B cell (primary cell): ENCODE measurements at regions of chr1 and their contacts with region 1.

Region 1: DNA sequence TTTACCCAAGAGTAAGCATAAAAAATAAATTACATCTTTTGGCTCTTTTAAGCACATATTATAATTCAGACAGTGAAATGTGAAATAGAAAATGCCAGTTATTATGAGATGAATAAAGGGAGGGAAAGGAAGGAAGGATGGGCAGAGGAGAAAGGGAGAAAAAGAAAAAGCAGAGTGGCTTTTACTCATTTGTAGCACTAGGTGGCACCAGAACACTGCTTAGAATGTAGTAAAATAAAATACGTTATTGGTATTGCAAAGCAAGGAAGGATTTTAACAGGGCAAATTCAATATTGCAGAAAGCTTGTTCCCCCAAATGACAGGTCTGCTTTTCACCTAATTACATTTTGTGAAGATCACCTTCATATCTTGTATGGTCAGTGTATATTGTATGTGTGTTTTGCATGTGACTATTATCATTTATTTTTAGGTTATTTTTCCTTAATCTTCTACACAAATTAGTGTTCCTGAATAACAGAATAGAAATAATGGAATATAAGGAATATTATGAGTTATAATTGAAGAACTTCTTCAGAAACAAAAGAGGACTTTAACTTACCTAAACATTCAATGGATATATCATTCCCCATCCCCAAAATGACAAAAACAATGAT is 9.1 kb upstream of the PCNX2 start:
- DNase-seq: peak; percentile 59
- ATAC-seq: peak; percentile 41
- H3K4me3 ChIP-seq: no peak overlapping the region
- H3K4me3 Mint-ChIP-seq: no peak overlapping the region
- H3K27ac ChIP-seq: no peak overlapping the region
- H3K27ac Mint-ChIP-seq: no peak overlapping the region
- H3K4me1 ChIP-seq: peaks cover 0 to 11% of the 10 kb centered on the region in 2 donors
- H3K4me1 Mint-ChIP-seq: peaks cover 5% of the 10 kb centered on the region
- H3K27me3 ChIP-seq: peaks cover 0 to 5% (median 0%) of the 10 kb centered on the region in 4 experiments
- H3K27me3 Mint-ChIP-seq: peaks cover 6% of the 10 kb centered on the region
- CTCF ChIP-seq: peak; percentile 98

Region 2: GRCh38 chr1:233364695-233365539 is 60.3 kb after region 1 on chr1:
- CTCF ChIA-PET with region 1: interaction called, 5 read pairs
- POLR2A ChIA-PET with region 1: no interaction called
- intact Hi-C with region 1: loop called (anchors 1 kb)
- DNase-seq: peak; percentile 16
- ATAC-seq: no peak
- H3K4me3 ChIP-seq: no peak overlapping the region
- H3K4me3 Mint-ChIP-seq: no peak overlapping the region
- H3K27ac ChIP-seq: no peak overlapping the region
- H3K27ac Mint-ChIP-seq: no peak overlapping the region
- H3K4me1 ChIP-seq: no peaks in the 10 kb centered on the region
- H3K4me1 Mint-ChIP-seq: no peaks in the 10 kb centered on the region
- H3K27me3 ChIP-seq: no peaks in the 10 kb centered on the region
- H3K27me3 Mint-ChIP-seq: no peaks in the 10 kb centered on the region
- CTCF ChIP-seq: peak; percentile 82

Region 3: DNA sequence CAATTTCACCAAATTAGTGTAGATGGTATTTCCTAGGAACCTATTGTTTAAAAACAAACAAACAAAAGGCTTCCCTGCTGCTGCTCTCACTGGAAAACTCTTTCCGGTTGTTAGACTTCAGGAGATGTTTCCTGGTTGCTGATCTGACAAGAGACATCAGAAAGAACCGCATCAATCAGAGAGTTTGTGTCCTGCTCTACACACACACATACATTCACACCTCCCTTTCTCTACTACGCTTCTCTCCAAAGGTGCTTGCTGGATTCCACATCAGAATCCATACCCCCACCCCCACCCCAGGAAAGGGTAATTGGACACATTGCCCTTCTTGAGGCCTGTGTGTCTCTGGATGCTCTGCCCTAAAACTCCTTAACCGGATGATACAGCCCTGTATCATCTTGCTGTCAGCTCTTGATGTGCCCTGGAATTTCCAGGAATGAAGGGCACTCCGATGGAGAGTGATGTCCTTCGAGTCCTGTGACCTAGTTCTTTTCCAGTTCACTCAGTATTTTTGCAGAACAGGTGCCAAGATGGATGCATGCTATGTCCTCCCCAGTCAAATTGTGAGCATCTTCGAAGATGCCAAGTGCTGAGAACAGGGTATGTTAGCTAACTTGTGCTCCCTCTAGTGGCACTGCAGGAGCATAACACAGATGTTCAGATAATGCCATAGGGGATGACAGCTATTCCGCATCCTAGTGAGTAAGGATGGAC is 486.2 kb after region 1 on chr1:
- CTCF ChIA-PET with region 1: interaction called, 18 read pairs
- POLR2A ChIA-PET with region 1: no interaction called
- intact Hi-C with region 1: no loop called
- DNase-seq: peak; percentile 58
- ATAC-seq: peak; percentile 63
- H3K4me3 ChIP-seq: no peak overlapping the region
- H3K4me3 Mint-ChIP-seq: no peak overlapping the region
- H3K27ac ChIP-seq: no peak overlapping the region
- H3K27ac Mint-ChIP-seq: no peak overlapping the region
- H3K4me1 ChIP-seq: no peaks in the 10 kb centered on the region
- H3K4me1 Mint-ChIP-seq: no peaks in the 10 kb centered on the region
- H3K27me3 ChIP-seq: no peaks in the 10 kb centered on the region
- H3K27me3 Mint-ChIP-seq: peaks cover 18% of the 10 kb centered on the region
- CTCF ChIP-seq: peak; percentile 90

Region 4: DNA sequence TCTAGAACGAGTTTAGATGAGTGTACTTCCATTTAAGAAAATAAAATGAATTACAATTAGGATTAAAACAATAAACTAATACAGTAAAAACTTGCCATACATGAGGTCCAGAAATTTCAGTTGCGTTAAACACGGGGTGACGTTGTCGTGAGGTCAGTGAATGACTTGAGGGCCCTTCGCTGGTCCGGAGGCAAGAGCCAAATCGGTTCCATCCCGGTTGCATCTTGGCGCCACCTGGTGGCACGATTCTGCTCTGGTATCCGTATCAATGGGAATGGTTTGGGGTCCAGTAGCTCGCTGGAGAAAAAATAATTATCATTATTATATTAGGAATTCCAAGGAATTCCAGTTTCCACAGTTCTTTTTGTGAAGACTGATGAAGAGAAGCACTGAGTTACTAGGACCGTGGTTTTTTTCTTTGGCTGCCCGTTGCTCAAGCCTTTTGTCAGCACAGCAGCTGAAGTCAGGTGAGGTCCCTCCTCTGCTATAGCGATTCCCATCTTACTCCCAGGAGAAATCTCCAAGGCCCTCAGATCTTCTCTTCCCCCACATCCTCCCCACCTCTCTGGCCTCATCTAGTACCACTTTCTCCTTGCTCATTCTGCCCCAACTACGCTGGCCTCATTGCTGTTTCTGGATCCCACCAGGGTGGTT is 761.3 kb after region 1 on chr1:
- CTCF ChIA-PET with region 1: interaction called, 55 read pairs
- POLR2A ChIA-PET with region 1: no interaction called
- intact Hi-C with region 1: loop called (anchors 1 kb)
- DNase-seq: peak; percentile 63
- ATAC-seq: no peak
- H3K4me3 ChIP-seq: no peak overlapping the region
- H3K4me3 Mint-ChIP-seq: no peak overlapping the region
- H3K27ac ChIP-seq: no peak overlapping the region
- H3K27ac Mint-ChIP-seq: no peak overlapping the region
- H3K4me1 ChIP-seq: peaks cover 0 to 3% of the 10 kb centered on the region in 2 donors
- H3K4me1 Mint-ChIP-seq: no peaks in the 10 kb centered on the region
- H3K27me3 ChIP-seq: peaks cover 0 to 3% (median 0%) of the 10 kb centered on the region in 4 experiments
- H3K27me3 Mint-ChIP-seq: peaks cover 5% of the 10 kb centered on the region
- CTCF ChIP-seq: peak; percentile 89

Region 5: DNA sequence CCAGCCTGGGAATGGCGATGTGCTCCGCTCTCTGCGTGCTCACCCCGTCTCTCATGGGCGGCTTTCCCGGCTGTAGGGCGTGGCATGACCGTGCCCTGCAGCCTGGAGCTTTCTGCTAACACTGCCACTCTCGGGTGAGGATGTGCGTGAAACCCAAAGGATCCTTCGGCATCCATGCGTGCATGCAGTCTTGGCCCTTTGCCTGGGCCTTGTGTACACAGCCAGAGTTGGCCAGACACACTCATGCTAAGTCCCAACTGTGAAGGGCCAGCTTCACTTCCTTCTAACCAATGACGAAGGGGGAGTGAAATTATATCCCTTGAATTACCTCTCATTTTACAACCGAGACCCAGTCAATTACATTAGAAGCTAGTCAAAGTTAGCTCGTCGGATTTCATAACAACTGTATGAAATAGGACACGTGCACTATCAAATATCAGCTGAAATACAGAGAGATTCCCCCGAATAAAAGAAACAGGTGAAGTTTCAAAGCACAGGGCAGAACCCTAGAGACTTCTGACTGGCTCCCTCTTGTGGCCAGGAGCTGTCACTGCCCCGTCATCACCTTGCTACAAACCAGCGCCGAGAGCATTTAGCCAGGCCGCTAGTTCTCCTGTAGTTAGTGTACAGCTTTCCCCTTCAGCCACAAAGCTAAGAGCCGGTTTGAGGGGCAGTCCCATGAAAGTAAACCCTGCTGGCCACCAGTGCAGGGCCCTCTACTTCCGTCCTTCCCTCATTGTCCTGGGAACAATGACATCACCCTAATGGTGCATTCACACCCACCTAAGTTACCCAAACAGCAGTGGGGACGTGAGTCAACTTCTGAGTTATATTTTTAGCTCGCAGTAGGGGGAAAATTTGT is 1005.2 kb after region 1 on chr1:
- CTCF ChIA-PET with region 1: interaction called, 7 read pairs
- POLR2A ChIA-PET with region 1: no interaction called
- intact Hi-C with region 1: loop called (anchors 10 kb)
- DNase-seq: peak; percentile 74
- ATAC-seq: peak; percentile 85
- H3K4me3 ChIP-seq: no peak overlapping the region
- H3K4me3 Mint-ChIP-seq: peak overlapping the region; percentile 23
- H3K27ac ChIP-seq: no peak overlapping the region
- H3K27ac Mint-ChIP-seq: no peak overlapping the region
- H3K4me1 ChIP-seq: peaks cover 0 to 9% of the 10 kb centered on the region in 2 donors
- H3K4me1 Mint-ChIP-seq: peaks cover 5% of the 10 kb centered on the region
- H3K27me3 ChIP-seq: no peaks in the 10 kb centered on the region
- H3K27me3 Mint-ChIP-seq: peaks cover 22% of the 10 kb centered on the region
- CTCF ChIP-seq: peak; percentile 84